CD4-positive, alpha-beta memory T cell (primary cell): ENCODE measurements at regions of chr15 and their contacts with region 1.

Region 1: DNA sequence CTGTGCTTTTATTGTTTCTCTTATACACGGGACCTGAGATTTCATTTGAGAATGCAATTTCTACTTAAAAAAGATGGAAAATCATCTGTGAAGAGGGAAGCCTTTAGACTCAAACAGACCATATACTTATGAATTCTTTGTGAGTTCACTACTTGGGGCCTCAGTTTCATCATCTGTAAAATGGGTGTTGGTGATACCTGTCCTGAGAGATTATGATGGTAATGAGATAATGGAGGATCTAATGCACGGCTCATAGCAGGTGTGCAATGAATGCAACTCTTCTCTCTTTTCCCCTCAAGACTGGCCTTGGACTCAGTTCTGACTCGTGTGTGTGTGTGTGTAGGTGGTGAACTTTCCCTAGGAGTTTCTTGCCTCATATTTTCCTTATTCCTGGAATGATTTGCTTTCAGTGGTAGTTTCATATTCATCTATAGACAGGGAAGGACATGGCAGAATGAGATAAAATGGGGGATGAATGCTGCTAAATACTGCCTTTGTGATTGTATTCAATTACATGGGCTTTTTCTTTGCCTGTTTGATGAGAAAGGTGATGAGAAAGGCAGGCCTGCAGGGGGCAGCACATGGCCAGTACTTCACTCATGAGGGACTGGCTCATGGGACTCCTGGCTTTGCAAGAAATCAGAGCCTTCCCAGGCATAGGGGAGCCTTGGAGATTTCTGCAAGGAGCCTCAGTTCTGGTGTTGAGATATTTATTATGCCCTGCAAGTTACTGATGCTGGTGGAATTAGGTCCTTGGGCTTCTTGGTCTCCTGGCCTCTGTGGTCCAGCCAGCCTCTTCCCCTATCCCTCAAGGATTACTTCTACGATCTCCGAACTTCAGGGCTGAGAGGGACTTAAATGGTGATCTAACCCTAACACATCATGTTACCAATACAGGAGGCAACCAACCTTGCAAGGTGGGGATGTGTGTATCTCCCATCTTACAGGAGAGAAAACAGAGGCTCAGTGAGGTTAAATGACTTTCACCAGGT is 70.7 kb downstream of the RPLP1 start:
- DNase-seq: peak; percentile 38 to 63 (median 53)
- H3K4me3 ChIP-seq: no peak overlapping the region
- H3K4me3 Mint-ChIP-seq: no peak overlapping the region
- H3K27ac ChIP-seq: no peak overlapping the region
- H3K27ac Mint-ChIP-seq: peak overlapping the region in 1 of 7 donors; percentile 33
- H3K4me1 ChIP-seq: no peaks in the 10 kb centered on the region
- H3K4me1 Mint-ChIP-seq: no peaks in the 10 kb centered on the region
- H3K27me3 ChIP-seq: no peaks in the 10 kb centered on the region
- H3K27me3 Mint-ChIP-seq: peaks cover 3 to 5% of the 10 kb centered on the region in 2 donors

Region 2: DNA sequence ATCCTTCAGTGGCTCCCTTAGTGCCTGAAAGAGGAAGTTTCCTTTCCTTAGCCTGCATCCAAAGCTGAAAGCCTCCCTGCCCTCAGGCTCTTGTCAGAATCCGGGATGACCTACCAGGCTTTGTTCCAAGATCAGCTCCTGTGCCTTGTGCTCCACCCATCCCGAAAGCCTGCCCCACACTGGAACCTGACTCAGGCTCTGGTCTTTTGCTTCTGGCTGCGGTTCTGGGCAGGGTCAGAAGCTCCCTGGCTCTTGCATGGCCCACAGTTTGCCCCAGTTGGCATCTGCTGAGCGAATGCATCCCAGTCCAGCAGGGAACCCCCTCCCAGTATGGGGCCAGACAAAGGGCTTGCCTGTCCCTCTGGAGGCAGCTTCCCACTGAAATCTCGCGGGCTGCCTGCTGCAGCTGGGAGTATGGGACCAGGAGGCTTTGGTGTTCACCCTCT is 135.0 kb before region 1 on chr15:
- CTCF ChIA-PET with region 1: no interaction called
- POLR2A ChIA-PET with region 1: no interaction called
- intact Hi-C with region 1: no loop called
- DNase-seq: no peak
- H3K4me3 ChIP-seq: no peak overlapping the region
- H3K4me3 Mint-ChIP-seq: no peak overlapping the region
- H3K27ac ChIP-seq: no peak overlapping the region
- H3K27ac Mint-ChIP-seq: peak overlapping the region in 1 of 7 donors; percentile 32
- H3K4me1 ChIP-seq: no peaks in the 10 kb centered on the region
- H3K4me1 Mint-ChIP-seq: no peaks in the 10 kb centered on the region
- H3K27me3 ChIP-seq: no peaks in the 10 kb centered on the region
- H3K27me3 Mint-ChIP-seq: peaks cover 3 to 6% of the 10 kb centered on the region in 2 donors

Region 3: DNA sequence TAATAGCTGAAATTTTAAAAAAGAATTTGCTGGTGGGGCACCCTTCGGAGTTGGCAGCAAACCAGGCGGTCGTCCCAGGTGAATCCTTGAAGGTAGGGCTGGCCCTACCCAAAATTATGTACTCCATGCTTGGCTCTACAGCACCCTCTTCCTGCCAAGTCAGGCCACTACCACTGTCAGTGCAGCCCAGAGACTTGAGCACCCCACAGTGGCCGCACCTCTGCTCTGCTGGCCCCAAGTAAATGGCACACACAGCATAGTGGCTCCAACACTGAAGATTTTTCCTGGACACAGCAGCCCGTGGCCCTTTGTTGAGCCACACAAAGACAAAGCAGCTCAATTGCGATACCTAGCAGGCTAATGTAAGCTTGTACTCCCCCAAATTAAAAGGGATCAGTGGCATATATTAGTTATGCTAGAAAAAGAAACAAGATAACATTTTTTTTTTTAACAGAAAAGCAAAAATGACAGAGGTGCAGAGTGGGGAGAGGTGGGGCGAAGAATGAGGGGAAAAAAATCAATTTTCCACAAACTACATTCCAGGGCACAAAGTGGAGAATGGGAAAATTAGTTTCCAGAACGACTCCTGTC is 989.6 kb after region 1 on chr15:
- CTCF ChIA-PET with region 1: no interaction called
- POLR2A ChIA-PET with region 1: no interaction called
- intact Hi-C with region 1: loop called (anchors 1 kb)
- DNase-seq: peak; percentile 55 to 67 (median 59)
- H3K4me3 ChIP-seq: no peak overlapping the region
- H3K4me3 Mint-ChIP-seq: no peak overlapping the region
- H3K27ac ChIP-seq: no peak overlapping the region
- H3K27ac Mint-ChIP-seq: peak overlapping the region in 1 of 7 donors; percentile 43
- H3K4me1 ChIP-seq: peaks cover 20% of the 10 kb centered on the region
- H3K4me1 Mint-ChIP-seq: peaks cover 9 to 28% (median 18%) of the 10 kb centered on the region in 4 donors
- H3K27me3 ChIP-seq: no peaks in the 10 kb centered on the region
- H3K27me3 Mint-ChIP-seq: no peaks in the 10 kb centered on the region